PC-9 (cell line): ENCODE measurements at regions of chr17 and their contacts with region 1.

Region 1: GRCh38 chr17:70278844-70279462 is 109.6 kb downstream of the KCNJ2 start:
- DNase-seq: no peak
- H3K4me3 ChIP-seq: no peak overlapping the region
- H3K27ac ChIP-seq: no peak overlapping the region
- H3K4me1 ChIP-seq: no peaks in the 10 kb centered on the region
- H3K27me3 ChIP-seq: no peaks in the 10 kb centered on the region; the same call in 1 of the 2 replicates
- CTCF ChIP-seq: no peak

Region 2: DNA sequence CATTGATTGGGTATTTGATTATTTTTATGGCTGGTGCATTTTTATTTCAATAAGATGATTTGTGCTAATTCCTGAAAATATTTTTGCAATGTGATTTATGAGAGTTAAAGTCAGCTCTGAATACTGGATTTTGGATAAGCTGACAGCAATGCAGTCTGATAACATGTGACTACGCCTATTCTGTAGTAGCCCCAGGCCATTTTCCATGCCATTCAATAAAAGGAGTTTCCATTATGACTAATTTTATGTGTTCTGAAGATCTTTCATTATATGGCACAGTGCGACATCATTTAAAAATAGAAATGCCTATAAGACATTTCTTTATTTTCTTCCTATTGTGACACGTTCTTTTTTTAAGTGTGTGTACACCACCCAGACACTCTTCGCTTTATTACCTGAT is 63.3 kb before region 1 on chr17:
- CTCF ChIA-PET with region 1: no interaction called
- POLR2A ChIA-PET with region 1: no interaction called
- intact Hi-C with region 1: loop called (anchors 10 kb)
- DNase-seq: no peak
- H3K4me3 ChIP-seq: no peak overlapping the region
- H3K27ac ChIP-seq: no peak overlapping the region
- H3K4me1 ChIP-seq: no peaks in the 10 kb centered on the region
- H3K27me3 ChIP-seq: no peaks in the 10 kb centered on the region
- CTCF ChIP-seq: no peak

Region 3: GRCh38 chr17:70242781-70243437 is 36.0 kb before region 1 on chr17:
- CTCF ChIA-PET with region 1: no interaction called
- POLR2A ChIA-PET with region 1: no interaction called
- intact Hi-C with region 1: no loop called
- DNase-seq: no peak
- H3K4me3 ChIP-seq: no peak overlapping the region
- H3K27ac ChIP-seq: no peak overlapping the region
- H3K4me1 ChIP-seq: 0 out of 2 replicates have a peak, but pooled peaks cover 7% of the 10 kb centered on the region
- H3K27me3 ChIP-seq: no peaks in the 10 kb centered on the region; the same call in 1 of the 2 replicates
- CTCF ChIP-seq: no peak

Region 4: DNA sequence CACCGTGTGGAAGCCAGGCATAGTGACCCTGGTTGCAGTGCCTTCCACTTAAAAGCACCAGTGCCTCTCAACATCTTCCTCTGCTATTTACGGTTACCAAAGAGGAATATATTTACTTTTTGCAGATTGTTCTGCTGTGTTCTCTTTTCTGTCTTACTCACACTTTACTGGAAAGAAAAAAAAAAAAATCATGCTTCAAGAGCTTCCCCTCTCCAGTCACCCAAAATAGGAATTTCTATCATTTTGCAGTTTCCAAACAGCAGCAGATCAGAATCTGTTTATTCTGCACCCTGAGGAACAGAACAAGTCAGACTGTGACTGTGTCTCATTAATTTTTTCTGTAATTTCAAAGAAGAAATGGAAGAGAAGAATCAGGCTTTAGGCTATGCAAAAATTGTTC is 13.5 kb before region 1 on chr17:
- CTCF ChIA-PET with region 1: no interaction called
- POLR2A ChIA-PET with region 1: no interaction called
- intact Hi-C with region 1: no loop called
- DNase-seq: no peak
- H3K4me3 ChIP-seq: no peak overlapping the region
- H3K27ac ChIP-seq: no peak overlapping the region
- H3K4me1 ChIP-seq: no peaks in the 10 kb centered on the region
- H3K27me3 ChIP-seq: no peaks in the 10 kb centered on the region
- CTCF ChIP-seq: no peak